Activated T-helper 1 cell treated with anti-CD3 and anti-CD28 coated beads, Interleukin-12 subunit alpha, Interleukin-12 subunit beta, Interleukin-2, Interleukin-4 antibody, amounts not matched to agents 30 ng/mL and 10 ng/mL and 1 ng/mL, durations not matched to agents 14 hours and 24 hours and 36 hours (primary cell): ENCODE measurements at regions of chr4 and their contacts with region 1.

Region 1: GRCh38 chr4:112284662-112285411 is 867 bp downstream of the TIFA start:
- DNase-seq: no peak
- H3K4me3 Mint-ChIP-seq: peak overlapping the region; percentile 87
- H3K27ac Mint-ChIP-seq: peak overlapping the region; percentile 95
- H3K4me1 Mint-ChIP-seq: peaks cover 91% of the 10 kb centered on the region
- H3K27me3 Mint-ChIP-seq: no peaks in the 10 kb centered on the region

Region 2: DNA sequence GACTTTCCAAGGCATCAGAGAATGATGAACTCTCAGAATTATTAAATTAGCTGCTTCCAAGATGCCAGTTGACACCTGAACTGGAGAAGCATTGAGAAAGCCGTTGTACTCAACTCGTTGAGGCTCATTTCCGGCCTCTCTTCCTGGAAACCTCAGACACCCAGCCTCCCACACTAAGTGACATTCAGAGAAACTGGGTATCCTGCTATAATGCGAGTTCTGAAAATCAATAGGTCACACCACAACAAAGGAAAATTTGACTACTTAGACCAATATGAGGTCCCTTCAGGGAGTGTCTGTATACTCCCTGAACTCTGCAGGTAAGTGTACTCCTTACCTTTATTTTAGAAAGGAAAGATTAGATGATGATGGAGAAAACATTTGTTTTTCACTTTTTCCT is 1757.7 kb before region 1 on chr4:
- intact Hi-C with region 1: loop called (anchors 5 kb)
- DNase-seq: peak; percentile 30
- H3K4me3 Mint-ChIP-seq: peak overlapping the region; percentile 8
- H3K27ac Mint-ChIP-seq: peak overlapping the region; percentile 47
- H3K4me1 Mint-ChIP-seq: peaks cover 20% of the 10 kb centered on the region
- H3K27me3 Mint-ChIP-seq: peaks cover 3% of the 10 kb centered on the region

Region 3: GRCh38 chr4:112145326-112145819 is 139.5 kb before region 1 on chr4 and contains the start of gene FAM241A:
- intact Hi-C with region 1: loop called (anchors 1 kb)
- DNase-seq: peak; percentile 80
- H3K4me3 Mint-ChIP-seq: peak within 1 kb of the TSS; percentile 98
- H3K27ac Mint-ChIP-seq: peak within 1 kb of the TSS; percentile 97
- H3K4me1 Mint-ChIP-seq: peaks cover 47% of the 10 kb centered on the region
- H3K27me3 Mint-ChIP-seq: no peaks in the 10 kb centered on the region
- total RNA-seq, gene FAM241A: 6.7 and 7.1 TPM in 2 replicates

Region 4: DNA sequence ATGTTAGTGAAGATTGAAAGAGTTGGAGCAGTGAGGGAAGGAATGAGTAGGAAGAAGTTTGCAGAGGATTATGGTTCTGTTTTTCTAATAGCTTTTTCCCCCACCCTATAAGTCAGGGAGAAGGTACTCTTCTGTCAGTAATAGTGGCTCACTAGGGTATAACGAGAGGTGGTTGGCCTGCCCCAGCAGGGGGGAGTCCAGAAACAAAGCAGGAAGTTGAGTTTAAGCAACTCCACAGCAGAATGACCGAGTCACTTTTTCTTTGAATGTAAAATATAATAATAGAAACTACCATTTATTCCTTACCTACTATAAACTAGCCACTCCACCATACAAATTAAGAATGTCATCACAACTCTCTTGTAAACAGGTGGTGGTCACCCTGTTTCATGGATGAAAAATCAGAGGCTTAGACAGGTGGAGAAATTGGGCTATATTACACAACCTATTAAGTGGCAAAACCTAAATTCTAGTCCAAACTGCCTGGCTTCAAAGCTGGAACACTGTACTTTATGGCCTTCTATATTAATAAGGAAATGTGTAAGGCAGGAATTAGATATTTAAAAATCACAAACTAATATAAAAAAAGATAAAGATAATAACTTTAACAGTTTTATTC is 31.3 kb before region 1 on chr4:
- intact Hi-C with region 1: no loop called
- DNase-seq: no peak
- H3K4me3 Mint-ChIP-seq: no peak overlapping the region
- H3K27ac Mint-ChIP-seq: no peak overlapping the region
- H3K4me1 Mint-ChIP-seq: no peaks in the 10 kb centered on the region
- H3K27me3 Mint-ChIP-seq: no peaks in the 10 kb centered on the region

Region 5: DNA sequence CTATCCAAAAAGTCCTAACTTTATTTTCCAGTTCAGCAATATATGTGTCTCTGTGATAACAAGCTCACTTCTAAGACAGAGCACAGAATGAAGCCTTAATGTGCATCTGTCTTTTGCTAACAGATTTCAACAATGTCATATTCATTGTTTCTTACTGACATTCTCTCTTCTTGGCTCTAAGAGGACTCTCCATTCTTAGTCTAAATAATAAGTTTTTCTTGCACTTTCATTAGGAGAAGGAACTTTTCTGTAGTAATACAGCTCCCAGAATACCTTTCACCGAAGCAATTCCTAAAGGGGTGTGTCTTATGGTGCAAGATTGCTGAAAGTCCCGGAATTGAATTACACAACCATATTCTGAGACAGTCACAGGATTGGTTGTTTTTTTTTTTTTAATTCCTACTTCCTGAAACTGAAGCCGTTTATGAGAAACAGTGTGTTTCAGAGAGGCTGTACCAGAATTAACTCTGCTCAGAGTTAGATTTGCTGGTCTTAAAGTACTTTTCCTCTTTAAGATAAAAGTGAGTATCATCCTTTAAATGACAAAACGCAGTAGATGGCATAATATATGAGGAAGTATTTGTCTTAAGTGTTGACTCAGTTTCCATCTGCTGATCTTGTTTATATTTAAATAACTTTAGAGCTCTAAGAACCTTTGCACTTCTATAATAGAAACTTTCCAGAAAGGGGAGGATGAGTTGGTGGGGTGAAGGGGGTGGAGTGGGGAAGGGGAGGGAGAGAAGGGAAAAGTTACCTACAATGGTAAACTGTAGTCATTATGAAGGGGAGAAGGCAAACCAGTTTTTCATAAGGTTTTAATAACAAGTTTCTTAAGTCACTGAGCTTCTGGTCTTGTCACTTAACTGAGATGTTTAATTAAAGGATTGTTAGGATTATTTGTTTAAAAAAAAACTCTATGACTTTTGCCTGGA is 12.4 kb after region 1 on chr4 and contains the start of gene ALPK1:
- intact Hi-C with region 1: loop called (anchors 1 kb)
- DNase-seq: no peak
- H3K4me3 Mint-ChIP-seq: peak within 1 kb of the TSS; percentile 88
- H3K27ac Mint-ChIP-seq: peak within 1 kb of the TSS; percentile 86
- H3K4me1 Mint-ChIP-seq: peaks cover 50% of the 10 kb centered on the region
- H3K27me3 Mint-ChIP-seq: no peaks in the 10 kb centered on the region
- total RNA-seq, gene ALPK1: 8.7 and 9.7 TPM in 2 replicates

Region 6: DNA sequence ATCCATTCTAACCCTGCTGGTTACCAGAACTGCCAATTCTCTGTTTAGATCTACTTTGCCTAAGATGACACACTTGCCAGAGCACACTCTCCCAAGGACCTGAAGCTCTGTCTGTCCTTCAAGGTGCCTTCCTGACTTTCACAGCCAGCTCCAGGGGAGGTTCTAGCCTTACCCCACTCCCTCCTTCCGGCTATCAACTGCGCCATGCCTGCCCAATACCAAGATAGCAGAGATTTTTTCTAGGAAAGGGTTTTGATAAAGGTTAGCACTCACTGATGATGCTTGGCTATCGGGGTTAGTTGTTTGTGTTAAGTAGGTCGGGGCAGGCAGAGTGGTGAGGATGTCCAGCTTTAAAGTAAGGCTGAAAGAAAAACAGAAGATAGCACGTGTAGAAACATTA is 26.7 kb after region 1 on chr4:
- intact Hi-C with region 1: no loop called
- DNase-seq: no peak
- H3K4me3 Mint-ChIP-seq: no peak overlapping the region
- H3K27ac Mint-ChIP-seq: no peak overlapping the region
- H3K4me1 Mint-ChIP-seq: peaks cover 30% of the 10 kb centered on the region
- H3K27me3 Mint-ChIP-seq: no peaks in the 10 kb centered on the region

Region 7: GRCh38 chr4:112321776-112322684 is 37.2 kb after region 1 on chr4:
- intact Hi-C with region 1: loop called (anchors 1 kb)
- DNase-seq: peak; percentile 64
- H3K4me3 Mint-ChIP-seq: no peak overlapping the region
- H3K27ac Mint-ChIP-seq: no peak overlapping the region
- H3K4me1 Mint-ChIP-seq: peaks cover 52% of the 10 kb centered on the region
- H3K27me3 Mint-ChIP-seq: no peaks in the 10 kb centered on the region

Region 8: GRCh38 chr4:112735474-112735951 is 450.7 kb after region 1 on chr4:
- intact Hi-C with region 1: loop called (anchors 5 kb)
- DNase-seq: no peak
- H3K4me3 Mint-ChIP-seq: no peak overlapping the region
- H3K27ac Mint-ChIP-seq: peak overlapping the region; percentile 34
- H3K4me1 Mint-ChIP-seq: peaks cover 23% of the 10 kb centered on the region
- H3K27me3 Mint-ChIP-seq: no peaks in the 10 kb centered on the region